GM13976 (cell line): ENCODE measurements at regions of chr4 and their contacts with region 1.

Region 1: DNA sequence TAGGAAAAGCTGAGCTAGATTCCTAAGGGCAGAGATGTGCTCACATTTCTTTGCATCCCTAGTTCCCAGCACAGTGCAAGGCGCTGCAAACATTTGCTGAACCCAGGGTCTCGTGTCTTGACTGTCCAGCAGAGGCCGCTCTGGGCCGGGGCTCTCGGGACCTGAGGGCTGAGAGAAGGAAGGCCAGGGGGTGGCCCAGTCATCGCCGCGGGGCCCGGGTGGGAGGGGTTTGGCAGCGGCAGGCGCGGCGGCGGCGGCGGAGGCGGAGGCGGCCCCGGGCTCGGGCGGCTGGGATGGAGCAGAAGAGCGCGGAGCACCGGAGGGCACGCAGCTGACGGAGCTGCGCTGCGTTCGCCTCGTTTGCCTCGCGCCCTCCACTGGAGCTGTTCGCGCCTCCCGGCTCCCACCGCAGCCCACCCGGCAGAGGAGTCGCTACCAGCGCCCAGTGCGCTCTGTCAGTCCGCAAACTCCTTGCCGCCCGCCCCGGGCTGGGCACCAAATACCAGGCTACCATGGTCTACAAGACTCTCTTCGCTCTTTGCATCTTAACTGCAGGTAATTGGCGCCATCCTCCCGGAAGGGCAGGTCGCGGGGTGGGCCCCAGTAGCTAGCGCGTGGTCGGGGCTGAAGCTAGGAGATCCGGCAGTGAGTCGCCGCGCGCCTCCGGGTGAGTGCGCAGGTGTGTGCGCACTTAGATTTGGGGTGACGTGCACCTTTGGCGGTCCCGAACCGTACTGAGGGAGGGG is at the start of gene PARM1:
- DNase-seq: peak; percentile 84
- CTCF ChIP-seq: peak; percentile 75

Region 2: GRCh38 chr4:74555231-74555630 is 377.8 kb before region 1 on chr4:
- in situ Hi-C with region 1: no loop called
- DNase-seq: no peak
- CTCF ChIP-seq: no peak

Region 3: DNA sequence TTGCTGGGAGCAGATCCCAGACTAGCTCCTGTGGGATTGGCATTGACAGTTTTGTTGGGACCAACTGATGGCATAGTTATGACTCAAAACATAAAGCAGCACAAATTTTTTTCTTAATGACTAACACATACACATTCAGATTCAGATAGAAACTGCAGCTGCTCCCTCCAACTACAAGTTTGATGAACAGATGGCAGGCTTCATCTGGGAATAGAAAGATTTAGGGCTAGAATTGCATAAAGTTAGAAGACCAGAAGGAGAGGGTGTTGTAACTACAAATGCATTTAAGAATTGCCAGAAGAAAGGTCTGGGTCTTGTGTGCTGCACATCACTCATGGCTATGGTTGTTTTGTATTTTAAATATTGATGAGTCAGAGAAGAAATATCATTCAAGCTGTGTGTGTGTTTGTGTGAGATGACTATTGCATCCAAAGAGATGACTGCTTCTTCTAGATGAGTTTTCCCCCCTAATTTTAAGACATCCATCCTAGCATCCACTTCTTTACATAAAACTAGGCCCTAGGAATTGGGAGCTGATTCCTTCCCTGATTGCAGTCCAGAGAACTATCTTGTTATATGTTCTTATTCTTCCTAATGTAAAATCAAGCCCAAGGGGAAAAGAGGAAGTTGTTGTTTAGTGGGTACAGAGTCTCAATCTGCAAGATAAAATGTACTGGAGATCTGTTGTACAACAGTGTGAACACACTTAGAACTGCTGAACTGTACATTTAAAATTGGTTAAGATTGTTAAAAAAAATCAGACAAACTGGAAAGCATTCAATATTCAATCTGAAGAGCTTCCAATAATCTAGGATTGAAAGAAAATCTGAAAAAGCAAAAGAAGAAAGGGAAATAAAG is 175.0 kb after region 1 on chr4:
- in situ Hi-C with region 1: loop called (anchors 25 kb)
- DNase-seq: no peak
- CTCF ChIP-seq: no peak

Region 4: GRCh38 chr4:75158451-75158850 is 225.5 kb after region 1 on chr4:
- in situ Hi-C with region 1: no loop called
- DNase-seq: no peak
- CTCF ChIP-seq: no peak

Region 5: GRCh38 chr4:75289914-75290582 is 357.1 kb after region 1 on chr4:
- in situ Hi-C with region 1: loop called (anchors 10 kb)
- DNase-seq: peak; percentile 6
- CTCF ChIP-seq: peak; percentile 47

Region 6: GRCh38 chr4:76120199-76120598 is 1187.2 kb after region 1 on chr4:
- in situ Hi-C with region 1: no loop called
- DNase-seq: no peak
- CTCF ChIP-seq: no peak